Activated CD4-positive, alpha-beta T cell treated with anti-CD3 and anti-CD28 coated beads, Interleukin-2, amount 10 ng/mL, durations not matched to agents 24 days and 14 days (primary cell): ENCODE measurements at regions of chr16 and their contacts with region 1.

Region 1: DNA sequence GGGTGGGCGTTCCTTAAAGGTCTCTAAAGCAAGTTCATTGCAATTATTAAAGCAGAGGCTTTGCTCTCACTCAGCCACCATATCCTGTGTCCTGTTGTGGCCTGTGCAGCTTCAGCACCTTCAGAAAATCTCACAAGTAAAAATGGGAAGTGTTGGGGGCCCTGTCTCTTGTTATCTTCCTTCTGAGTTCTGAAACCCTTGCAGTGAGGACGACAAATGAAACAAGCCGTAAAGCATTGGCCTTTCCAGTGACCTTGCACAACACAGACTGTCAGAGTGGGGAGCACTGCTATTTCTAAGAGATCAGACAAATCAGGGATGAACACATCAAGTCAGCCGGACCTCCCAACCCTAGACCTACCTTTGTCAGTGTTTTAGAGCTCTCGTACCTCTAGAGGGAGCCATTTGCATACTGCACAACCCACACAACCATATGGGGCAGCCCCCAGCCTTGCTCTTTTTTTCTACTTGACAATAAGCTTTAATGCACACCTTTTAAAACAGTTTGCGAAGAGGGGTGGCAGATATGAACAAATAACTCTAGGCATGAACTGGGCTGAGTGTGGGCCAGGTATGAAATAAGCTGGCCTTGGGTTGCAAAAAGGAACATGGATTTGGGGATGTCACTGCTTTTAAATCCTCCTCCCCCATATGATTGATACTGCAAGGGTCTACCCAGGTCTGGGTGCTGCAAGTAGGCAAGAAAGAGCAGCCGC is 89.8 kb downstream of the KATNIP start:
- DNase-seq: peak; percentile 71
- H3K4me3 Mint-ChIP-seq: no peak overlapping the region
- H3K27ac Mint-ChIP-seq: no peak overlapping the region
- H3K4me1 Mint-ChIP-seq: peaks cover 2% of the 10 kb centered on the region
- H3K27me3 Mint-ChIP-seq: no peaks in the 10 kb centered on the region

Region 2: DNA sequence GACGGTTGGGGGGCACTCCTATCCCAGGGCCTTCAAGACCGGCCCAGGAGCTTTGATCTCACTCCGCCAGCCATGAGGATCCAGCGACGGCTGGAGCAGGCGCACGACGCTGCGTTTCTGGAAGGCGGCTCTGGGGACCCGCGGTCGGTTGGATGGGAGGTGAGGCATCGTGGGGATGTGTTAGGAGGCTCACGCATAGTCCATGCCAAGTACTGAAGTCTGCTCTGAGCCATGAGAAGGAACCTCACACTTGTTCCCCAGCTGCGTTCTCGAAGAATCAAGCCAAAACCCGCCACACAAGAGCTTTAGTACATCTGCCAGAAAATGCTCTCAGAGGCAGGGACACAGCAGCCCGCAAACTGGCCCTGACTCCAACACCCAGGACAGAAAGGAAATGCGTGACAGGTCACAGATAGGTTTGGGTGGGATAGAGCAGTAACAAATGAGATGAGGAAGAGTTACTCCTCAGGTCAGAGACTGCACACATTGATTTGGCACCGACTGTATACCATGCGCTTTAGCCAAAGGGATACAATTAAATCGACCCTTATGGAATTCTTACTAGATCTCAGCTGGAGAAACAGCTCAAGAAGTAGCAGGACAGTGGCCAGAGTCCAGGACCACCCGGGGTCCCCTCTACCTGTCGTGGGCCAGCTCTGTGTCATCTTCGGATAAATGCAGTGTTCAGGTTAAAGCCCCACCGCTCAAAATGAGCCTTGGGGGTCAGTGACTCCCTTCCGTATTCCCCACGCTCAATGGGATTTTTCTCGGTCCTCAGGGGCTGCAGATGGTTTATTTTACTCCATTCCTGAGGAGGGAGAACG is 430.5 kb after region 1 on chr16:
- intact Hi-C with region 1: loop called (anchors 1 kb)
- DNase-seq: no peak
- H3K4me3 Mint-ChIP-seq: no peak overlapping the region
- H3K27ac Mint-ChIP-seq: no peak overlapping the region
- H3K4me1 Mint-ChIP-seq: peaks cover 2% of the 10 kb centered on the region
- H3K27me3 Mint-ChIP-seq: peaks cover 9% of the 10 kb centered on the region